ENCODE measurements at regions of chr22 and their contacts with region 1.

Region 1: DNA sequence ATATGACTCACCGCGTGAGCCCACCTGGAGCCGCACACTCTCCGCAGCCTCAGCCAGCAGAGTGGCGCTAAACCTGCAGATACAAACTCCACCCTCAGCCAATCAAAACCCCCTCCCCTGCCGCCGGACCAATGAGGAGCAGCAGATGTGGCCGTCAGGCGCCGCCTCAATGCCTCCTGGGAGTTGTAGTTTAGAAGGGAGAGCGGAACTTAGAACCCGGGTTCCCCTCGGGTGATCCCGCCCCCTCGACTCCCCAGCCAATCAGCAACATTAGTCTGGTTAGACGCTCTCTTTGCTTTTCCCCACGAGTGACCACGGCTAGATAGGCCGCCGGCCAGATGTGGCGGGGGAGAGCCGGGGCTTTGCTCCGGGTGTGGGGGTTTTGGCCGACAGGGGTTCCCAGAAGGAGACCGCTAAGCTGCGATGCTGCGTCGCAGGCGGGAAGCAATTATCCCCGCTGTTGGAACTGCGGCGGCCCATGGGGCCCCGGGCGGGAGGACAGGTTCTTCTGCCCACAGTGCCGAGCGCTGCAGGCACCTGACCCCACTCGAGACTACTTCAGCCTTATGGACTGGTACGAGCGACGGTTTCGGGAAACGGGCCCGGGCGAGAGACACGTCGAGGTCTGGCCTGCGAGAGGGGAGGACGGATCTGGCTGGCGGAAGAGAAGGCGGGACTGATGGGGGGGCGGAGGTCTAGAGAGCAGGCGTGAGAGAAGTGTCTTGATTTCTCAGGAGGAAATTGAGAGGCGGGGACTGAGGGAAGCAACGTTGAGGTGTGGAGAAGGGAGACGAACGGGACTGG is at the starts of genes CHEK2 and HSCB:
- DNase-seq: peak; percentile 98
- ATAC-seq: peak; percentile 99
- H3K4me3 ChIP-seq: peak within 1 kb of the TSS; percentile 62 to 98 (median 82)
- H3K27ac ChIP-seq: peak within 1 kb of the TSS; percentile 90 to 99 (median 94)
- H3K4me1 ChIP-seq: peaks cover 12 to 13% of the 10 kb centered on the region in 2 donors
- H3K27me3 ChIP-seq: no peaks in the 10 kb centered on the region
- CTCF ChIP-seq: peak in 1 of 5 experiments; percentile 15
- POLR2A ChIP-seq: peak; percentile 64 to 75
- total RNA-seq, gene CHEK2: 0.58 to 5.7 (median 3.7) TPM
- total RNA-seq, gene HSCB: 14.4 to 30.4 (median 22.9) TPM

Region 2: GRCh38 chr22:28619236-28619635 is 122.7 kb before region 1 on chr22:
- in situ Hi-C with region 1: no loop called
- intact Hi-C with region 1: no loop called
- DNase-seq: no peak
- ATAC-seq: no peak
- H3K4me3 ChIP-seq: no peak overlapping the region
- H3K27ac ChIP-seq: no peak overlapping the region
- H3K4me1 ChIP-seq: no peaks in the 10 kb centered on the region
- H3K27me3 ChIP-seq: no peaks in the 10 kb centered on the region
- CTCF ChIP-seq: no peak
- POLR2A ChIP-seq: no peak

Region 3: GRCh38 chr22:28759861-28760560 is 18.1 kb after region 1 on chr22:
- in situ Hi-C with region 1: no loop called
- intact Hi-C with region 1: no loop called
- DNase-seq: no peak
- ATAC-seq: no peak
- H3K4me3 ChIP-seq: no peak overlapping the region
- H3K27ac ChIP-seq: no peak overlapping the region
- H3K4me1 ChIP-seq: no peaks in the 10 kb centered on the region
- H3K27me3 ChIP-seq: no peaks in the 10 kb centered on the region
- CTCF ChIP-seq: no peak
- POLR2A ChIP-seq: no peak

Region 4: GRCh38 chr22:28772633-28773460 is 30.9 kb after region 1 on chr22 and contains the start of gene CCDC117:
- in situ Hi-C with region 1: no loop called
- intact Hi-C with region 1: loop called (anchors 1 kb)
- DNase-seq: peak; percentile 92 to 94
- ATAC-seq: peak; percentile 97 to 98
- H3K4me3 ChIP-seq: peak within 1 kb of the TSS; percentile 71 to 92 (median 78)
- H3K27ac ChIP-seq: peak within 1 kb of the TSS; percentile 89 to 99 (median 94)
- H3K4me1 ChIP-seq: peaks cover 16% of the 10 kb centered on the region in 2 donors
- H3K27me3 ChIP-seq: no peaks in the 10 kb centered on the region
- CTCF ChIP-seq: peak in 4 of 5 experiments; percentile 29 to 70 (median 60)
- POLR2A ChIP-seq: peak; percentile 88 to 93
- total RNA-seq, gene CCDC117: 23.2 to 40.1 (median 30.5) TPM